ENCODE measurements at regions of chr13 and their contacts with region 1.

Region 1: GRCh38 chr13:86066611-86067365 is 267.6 kb upstream of the SLITRK6 start:
- DNase-seq: no peak
- ATAC-seq: no peak
- H3K4me3 ChIP-seq: no peak overlapping the region
- H3K4me3 Mint-ChIP-seq: no peak overlapping the region
- H3K27ac ChIP-seq: no peak overlapping the region
- H3K27ac Mint-ChIP-seq: no peak overlapping the region
- H3K4me1 ChIP-seq: no peaks in the 10 kb centered on the region
- H3K4me1 Mint-ChIP-seq: no peaks in the 10 kb centered on the region
- H3K27me3 ChIP-seq: no peaks in the 10 kb centered on the region
- H3K27me3 Mint-ChIP-seq: no peaks in the 10 kb centered on the region
- CTCF ChIP-seq: no peak

Region 2: DNA sequence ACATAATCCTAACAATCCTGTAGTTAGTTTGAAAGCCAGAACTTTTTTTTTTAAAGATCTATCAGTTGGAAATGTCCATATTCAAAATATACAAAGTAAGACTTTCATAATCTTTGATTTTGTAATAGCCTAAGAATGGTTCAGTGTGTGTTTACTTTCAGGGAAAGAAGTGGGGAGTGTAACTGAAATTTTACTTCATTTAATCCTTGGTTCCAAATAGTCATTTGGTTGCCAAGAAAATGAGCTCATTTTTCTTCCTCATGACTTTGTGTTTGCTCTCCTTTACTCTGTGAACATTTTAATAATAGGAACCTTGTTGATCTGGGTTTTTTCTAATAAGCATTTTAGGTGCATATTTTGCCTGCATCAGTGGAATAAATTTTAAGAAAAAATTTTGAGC is 546.3 kb before region 1 on chr13:
- CTCF ChIA-PET with region 1: no interaction called
- POLR2A ChIA-PET with region 1: no interaction called
- intact Hi-C with region 1: no loop called
- DNase-seq: no peak
- ATAC-seq: no peak
- H3K4me3 ChIP-seq: no peak overlapping the region
- H3K4me3 Mint-ChIP-seq: no peak overlapping the region
- H3K27ac ChIP-seq: no peak overlapping the region
- H3K27ac Mint-ChIP-seq: no peak overlapping the region
- H3K4me1 ChIP-seq: no peaks in the 10 kb centered on the region
- H3K4me1 Mint-ChIP-seq: no peaks in the 10 kb centered on the region
- H3K27me3 ChIP-seq: no peaks in the 10 kb centered on the region
- H3K27me3 Mint-ChIP-seq: no peaks in the 10 kb centered on the region
- CTCF ChIP-seq: no peak

Region 3: GRCh38 chr13:85616275-85616674 is 450.5 kb before region 1 on chr13:
- CTCF ChIA-PET with region 1: no interaction called
- POLR2A ChIA-PET with region 1: no interaction called
- intact Hi-C with region 1: no loop called
- DNase-seq: no peak
- ATAC-seq: no peak
- H3K4me3 ChIP-seq: no peak overlapping the region
- H3K4me3 Mint-ChIP-seq: no peak overlapping the region
- H3K27ac ChIP-seq: no peak overlapping the region
- H3K27ac Mint-ChIP-seq: no peak overlapping the region
- H3K4me1 ChIP-seq: no peaks in the 10 kb centered on the region
- H3K4me1 Mint-ChIP-seq: no peaks in the 10 kb centered on the region
- H3K27me3 ChIP-seq: no peaks in the 10 kb centered on the region
- H3K27me3 Mint-ChIP-seq: no peaks in the 10 kb centered on the region
- CTCF ChIP-seq: no peak

Region 4: DNA sequence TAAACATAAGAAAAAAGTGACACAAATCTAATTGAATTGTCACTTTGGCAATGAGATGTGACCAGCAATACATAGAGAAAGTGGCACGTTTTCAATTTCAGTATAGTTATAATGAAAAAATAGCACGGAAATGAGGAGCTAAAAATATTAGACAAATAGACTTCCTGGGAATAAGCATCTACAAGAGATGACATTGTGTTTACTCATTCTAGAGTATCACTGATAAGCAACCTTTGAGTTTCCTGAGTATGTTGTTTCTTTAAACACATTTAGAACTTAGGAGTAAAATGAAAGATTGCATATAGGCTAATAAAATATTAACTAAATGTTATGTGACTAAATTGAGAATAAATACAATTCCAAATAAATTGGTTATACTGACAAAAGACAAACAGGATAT is 60.5 kb before region 1 on chr13:
- CTCF ChIA-PET with region 1: no interaction called
- POLR2A ChIA-PET with region 1: no interaction called
- intact Hi-C with region 1: no loop called
- DNase-seq: no peak
- ATAC-seq: no peak
- H3K4me3 ChIP-seq: no peak overlapping the region
- H3K4me3 Mint-ChIP-seq: no peak overlapping the region
- H3K27ac ChIP-seq: no peak overlapping the region
- H3K27ac Mint-ChIP-seq: no peak overlapping the region
- H3K4me1 ChIP-seq: no peaks in the 10 kb centered on the region
- H3K4me1 Mint-ChIP-seq: no peaks in the 10 kb centered on the region
- H3K27me3 ChIP-seq: no peaks in the 10 kb centered on the region
- H3K27me3 Mint-ChIP-seq: no peaks in the 10 kb centered on the region
- CTCF ChIP-seq: no peak

Region 5: DNA sequence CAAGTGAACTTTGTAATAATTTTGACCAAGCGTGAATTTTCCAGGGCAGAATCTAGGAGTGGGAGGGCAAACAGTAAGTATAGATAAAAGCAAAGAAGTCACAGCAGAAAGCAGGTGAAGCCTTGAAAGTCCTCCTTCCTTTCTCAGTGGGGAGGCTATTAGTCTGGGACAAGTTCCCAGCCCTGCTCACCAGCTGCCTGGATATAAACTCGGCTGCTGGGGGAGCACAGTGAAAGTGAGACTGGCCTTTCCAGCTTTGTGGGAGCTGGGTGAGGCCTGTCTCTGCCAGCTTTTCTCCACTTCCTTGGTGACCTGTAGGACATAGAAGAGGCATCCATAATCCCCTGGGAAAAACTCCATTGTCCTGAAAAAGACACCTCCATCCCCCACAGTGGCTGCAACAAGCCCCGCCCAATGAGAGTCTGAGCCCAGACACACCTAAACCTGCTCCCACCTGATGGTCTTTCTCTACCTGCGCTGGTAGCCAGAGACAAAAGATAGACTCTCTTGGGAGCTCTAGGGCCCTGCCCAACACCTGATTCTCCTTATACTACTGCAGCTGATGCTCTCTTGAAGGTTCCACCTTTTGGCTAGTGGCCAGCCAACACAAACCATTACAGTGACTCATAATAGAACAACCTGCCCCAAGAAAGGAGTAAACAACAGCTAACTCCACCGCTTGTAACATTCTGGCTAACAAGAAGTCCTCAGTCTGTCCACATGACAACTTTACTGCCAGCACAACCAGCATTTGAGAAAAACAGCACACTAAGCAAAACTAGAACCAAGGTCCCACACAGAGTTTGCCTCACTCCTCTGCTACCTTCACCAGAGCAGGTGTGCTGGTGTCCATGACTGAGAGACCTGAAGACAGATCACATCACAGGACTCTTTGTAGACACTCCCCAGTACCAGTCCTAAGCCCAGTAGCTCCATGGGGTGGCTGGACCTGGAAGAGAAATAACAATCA is 15.4 kb before region 1 on chr13:
- CTCF ChIA-PET with region 1: no interaction called
- POLR2A ChIA-PET with region 1: no interaction called
- intact Hi-C with region 1: loop called in 1 of 2 experiments (anchors 1 kb)
- DNase-seq: no peak
- ATAC-seq: no peak
- H3K4me3 ChIP-seq: no peak overlapping the region
- H3K4me3 Mint-ChIP-seq: no peak overlapping the region
- H3K27ac ChIP-seq: no peak overlapping the region
- H3K27ac Mint-ChIP-seq: no peak overlapping the region
- H3K4me1 ChIP-seq: no peaks in the 10 kb centered on the region
- H3K4me1 Mint-ChIP-seq: no peaks in the 10 kb centered on the region
- H3K27me3 ChIP-seq: no peaks in the 10 kb centered on the region
- H3K27me3 Mint-ChIP-seq: no peaks in the 10 kb centered on the region
- CTCF ChIP-seq: no peak